B cell (primary cell): ENCODE measurements at regions of chr3 and their contacts with region 1.

Region 1: DNA sequence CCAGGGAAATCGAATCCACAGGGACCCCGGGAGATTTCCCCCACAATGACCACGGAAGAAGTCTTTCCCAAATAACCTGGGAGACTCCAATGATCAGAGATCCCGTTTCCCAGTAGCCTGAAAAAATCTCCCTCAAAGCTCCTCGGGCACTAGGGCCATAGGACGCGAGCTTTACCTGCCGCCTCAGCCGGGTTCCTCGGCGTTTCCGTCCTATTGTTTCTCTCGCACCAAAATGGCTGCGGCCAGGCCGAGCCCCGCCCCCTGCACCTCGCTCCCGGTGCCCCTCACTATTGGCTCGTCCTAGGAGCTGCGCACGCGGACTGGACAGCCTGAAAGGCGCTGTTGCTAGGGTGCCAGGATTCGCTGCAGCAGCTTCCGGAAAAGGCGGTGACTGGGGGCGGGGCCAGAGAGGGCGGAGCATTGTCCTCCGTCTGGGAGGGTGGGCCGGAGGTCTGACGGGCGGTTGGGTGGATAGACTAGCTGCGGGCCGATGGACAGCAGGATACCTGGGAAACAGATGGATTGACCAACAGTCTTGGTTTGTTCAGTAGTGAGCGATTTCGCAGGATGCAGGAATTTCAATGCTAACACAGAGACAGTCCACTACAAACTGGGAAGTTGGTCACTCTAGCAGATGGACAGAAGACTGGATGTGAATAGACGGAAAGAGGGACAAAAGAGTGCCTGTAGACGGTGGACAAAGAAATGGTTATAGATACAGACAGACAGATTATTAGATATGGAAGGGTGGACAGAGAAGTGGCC is at the start of gene IP6K2:
- DNase-seq: peak; percentile 97
- ATAC-seq: peak; percentile 99
- H3K4me3 ChIP-seq: peak within 1 kb of the TSS; percentile 90 to 99 (median 95)
- H3K4me3 Mint-ChIP-seq: peak within 1 kb of the TSS; percentile 98
- H3K27ac ChIP-seq: peak within 1 kb of the TSS; percentile 74 to 77
- H3K27ac Mint-ChIP-seq: peak within 1 kb of the TSS; percentile 93
- H3K4me1 ChIP-seq: peaks cover 18 to 20% of the 10 kb centered on the region in 2 donors
- H3K4me1 Mint-ChIP-seq: peaks cover 33% of the 10 kb centered on the region
- H3K27me3 ChIP-seq: no peaks in the 10 kb centered on the region
- H3K27me3 Mint-ChIP-seq: no peaks in the 10 kb centered on the region
- CTCF ChIP-seq: no peak
- total RNA-seq, gene IP6K2: 138 and 140 TPM in 2 replicates

Region 2: DNA sequence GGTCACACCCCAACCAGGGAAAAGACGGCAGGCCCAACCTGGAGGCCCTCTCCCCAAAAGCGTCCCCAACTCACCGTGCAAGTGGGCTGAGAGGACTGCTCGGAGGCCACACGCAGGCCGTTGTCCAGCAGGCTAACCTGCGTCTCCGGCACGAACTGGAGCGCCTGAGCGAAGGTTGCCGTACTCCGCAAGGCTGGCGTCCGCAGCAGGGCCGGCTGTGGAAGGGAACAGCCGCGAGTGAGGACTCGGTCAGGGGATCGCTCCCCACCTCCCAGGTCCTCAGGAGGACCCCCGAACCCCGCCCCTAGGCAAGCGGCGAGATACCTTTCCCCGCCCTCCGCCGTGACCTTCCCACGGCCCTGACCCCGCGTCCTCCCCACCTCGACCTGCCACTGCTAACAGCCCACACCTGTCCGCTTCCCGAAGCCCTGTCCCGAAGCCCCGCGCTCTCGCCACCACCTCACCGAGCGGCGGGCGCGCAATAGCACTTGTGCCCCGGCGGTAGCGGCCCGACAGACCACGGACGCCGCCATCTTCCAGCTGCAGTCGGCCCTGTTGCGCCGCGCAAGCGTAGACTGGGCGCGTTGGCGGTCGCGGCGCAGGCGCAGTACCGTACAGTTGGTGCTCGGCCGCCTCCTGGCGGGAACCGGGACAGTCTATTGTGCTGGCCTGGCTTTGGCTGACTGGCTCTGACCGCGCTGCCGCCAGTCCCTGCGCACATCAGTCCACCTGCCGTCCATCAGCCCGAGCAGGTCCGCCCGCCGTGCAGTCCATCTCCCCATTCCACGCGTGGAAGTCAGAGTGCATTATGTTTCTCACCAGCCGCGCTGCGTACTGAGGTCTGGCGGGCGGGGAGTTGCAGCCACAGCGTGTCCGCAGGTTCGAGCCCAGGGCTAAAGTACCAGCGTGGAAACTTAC is 107.8 kb before region 1 on chr3 and contains the start of gene UQCRC1:
- CTCF ChIA-PET with region 1: no interaction called
- POLR2A ChIA-PET with region 1: interaction called, 3 read pairs
- intact Hi-C with region 1: loop called (anchors 1 kb)
- DNase-seq: peak; percentile 95
- ATAC-seq: peak; percentile 99
- H3K4me3 ChIP-seq: peak within 1 kb of the TSS; percentile 68 to 99 (median 94)
- H3K4me3 Mint-ChIP-seq: peak within 1 kb of the TSS; percentile 100
- H3K27ac ChIP-seq: peak within 1 kb of the TSS; percentile 72 to 90
- H3K27ac Mint-ChIP-seq: peak within 1 kb of the TSS; percentile 98
- H3K4me1 ChIP-seq: peaks cover 10 to 14% of the 10 kb centered on the region in 2 donors
- H3K4me1 Mint-ChIP-seq: peaks cover 15% of the 10 kb centered on the region
- H3K27me3 ChIP-seq: no peaks in the 10 kb centered on the region
- H3K27me3 Mint-ChIP-seq: no peaks in the 10 kb centered on the region
- CTCF ChIP-seq: peak; percentile 81
- total RNA-seq, gene UQCRC1: 98.9 and 99.9 TPM in 2 replicates

Region 3: GRCh38 chr3:48685602-48686511 is 31.3 kb before region 1 on chr3 and contains the start of gene NCKIPSD:
- CTCF ChIA-PET with region 1: interaction called, 3 read pairs
- POLR2A ChIA-PET with region 1: no interaction called
- intact Hi-C with region 1: loop called (anchors 1 kb)
- DNase-seq: peak; percentile 96
- ATAC-seq: peak; percentile 91
- H3K4me3 ChIP-seq: peak within 1 kb of the TSS in 4 of 5 experiments; percentile 58 to 75 (median 70)
- H3K4me3 Mint-ChIP-seq: peak within 1 kb of the TSS; percentile 89
- H3K27ac ChIP-seq: peak within 1 kb of the TSS; percentile 40 to 68
- H3K27ac Mint-ChIP-seq: peak within 1 kb of the TSS; percentile 92
- H3K4me1 ChIP-seq: peaks cover 10 to 25% of the 10 kb centered on the region in 2 donors
- H3K4me1 Mint-ChIP-seq: peaks cover 22% of the 10 kb centered on the region
- H3K27me3 ChIP-seq: no peaks in the 10 kb centered on the region
- H3K27me3 Mint-ChIP-seq: no peaks in the 10 kb centered on the region
- CTCF ChIP-seq: peak; percentile 91
- total RNA-seq, gene NCKIPSD: 19.1 and 19.7 TPM in 2 replicates

Region 4: DNA sequence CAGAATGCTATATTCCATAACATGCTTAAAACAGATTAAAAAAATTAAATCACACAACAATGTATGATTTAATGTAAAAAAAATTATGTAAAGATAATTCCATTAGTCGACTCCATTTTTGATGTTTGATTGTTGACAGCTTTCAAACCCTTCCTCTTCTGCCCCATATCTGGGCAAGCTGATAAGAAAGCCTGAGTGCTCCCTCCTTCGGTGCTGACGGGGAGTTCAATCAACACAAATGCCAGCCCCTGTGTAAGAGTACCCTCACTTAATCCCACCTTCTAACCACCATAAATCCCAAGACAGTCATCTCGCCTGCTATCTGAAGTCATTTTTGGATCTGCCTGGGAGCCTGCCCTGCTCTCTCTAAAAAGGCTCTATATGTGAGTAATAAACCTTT is 59.7 kb after region 1 on chr3:
- CTCF ChIA-PET with region 1: no interaction called
- POLR2A ChIA-PET with region 1: no interaction called
- intact Hi-C with region 1: no loop called
- DNase-seq: no peak
- ATAC-seq: no peak
- H3K4me3 ChIP-seq: no peak overlapping the region
- H3K4me3 Mint-ChIP-seq: no peak overlapping the region
- H3K27ac ChIP-seq: no peak overlapping the region
- H3K27ac Mint-ChIP-seq: no peak overlapping the region
- H3K4me1 ChIP-seq: no peaks in the 10 kb centered on the region
- H3K4me1 Mint-ChIP-seq: no peaks in the 10 kb centered on the region
- H3K27me3 ChIP-seq: no peaks in the 10 kb centered on the region
- H3K27me3 Mint-ChIP-seq: no peaks in the 10 kb centered on the region
- CTCF ChIP-seq: no peak

Region 5: DNA sequence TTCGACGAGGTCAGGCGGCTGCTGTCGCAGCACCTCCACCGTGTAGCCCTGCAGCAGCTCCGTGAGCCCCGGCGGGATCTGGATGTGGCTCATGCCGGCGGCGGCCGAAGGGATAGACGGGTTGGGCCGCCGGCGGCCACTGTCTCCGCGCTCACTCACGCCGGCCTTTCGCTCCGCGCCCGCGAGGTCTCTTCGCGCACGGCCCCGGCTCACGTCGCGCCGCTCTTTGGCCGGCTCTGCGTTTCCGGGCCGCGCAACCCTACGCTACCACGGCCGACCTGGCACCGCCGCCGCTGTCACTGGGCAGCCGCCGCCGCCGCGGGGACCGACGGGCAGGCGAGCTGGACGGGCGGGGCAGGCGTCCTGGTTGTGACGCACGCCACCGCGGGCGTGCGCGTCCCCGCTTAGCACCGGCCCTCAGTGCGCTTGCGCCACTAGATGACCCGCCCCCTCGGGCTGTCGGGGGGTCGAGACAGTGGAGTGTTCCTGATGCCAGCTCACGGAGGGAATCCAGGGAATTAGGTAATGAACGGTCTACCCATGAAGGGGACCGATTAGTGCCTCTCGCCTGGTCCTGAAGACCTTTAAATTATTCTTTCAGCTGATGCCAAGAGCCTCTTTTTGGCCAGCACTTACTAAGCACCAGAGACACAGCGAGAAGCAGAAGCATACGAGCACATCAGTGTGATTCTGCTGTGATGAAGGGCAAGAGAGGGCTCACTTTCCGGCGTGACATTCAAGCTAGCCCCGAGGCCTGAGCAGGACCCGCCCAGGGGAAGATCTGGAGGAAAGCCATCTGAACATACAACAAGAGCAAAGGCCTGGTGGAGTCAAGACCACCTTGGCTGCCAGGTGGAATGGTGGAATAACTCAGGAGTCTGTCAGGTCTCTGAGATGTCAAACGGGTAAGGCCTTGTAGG is 130.6 kb after region 1 on chr3 and contains the start of gene PRKAR2A:
- CTCF ChIA-PET with region 1: no interaction called
- POLR2A ChIA-PET with region 1: interaction called, 3 read pairs
- intact Hi-C with region 1: loop called (anchors 1 kb)
- DNase-seq: peak; percentile 93
- ATAC-seq: peak; percentile 95
- H3K4me3 ChIP-seq: peak within 1 kb of the TSS; percentile 67 to 88 (median 80)
- H3K4me3 Mint-ChIP-seq: peak within 1 kb of the TSS; percentile 96
- H3K27ac ChIP-seq: peak within 1 kb of the TSS; percentile 68 to 89
- H3K27ac Mint-ChIP-seq: peak within 1 kb of the TSS; percentile 96
- H3K4me1 ChIP-seq: peaks cover 16 to 25% of the 10 kb centered on the region in 2 donors
- H3K4me1 Mint-ChIP-seq: peaks cover 28% of the 10 kb centered on the region
- H3K27me3 ChIP-seq: no peaks in the 10 kb centered on the region
- H3K27me3 Mint-ChIP-seq: no peaks in the 10 kb centered on the region
- CTCF ChIP-seq: no peak
- total RNA-seq, gene PRKAR2A: 25.0 and 27.5 TPM in 2 replicates

Region 6: DNA sequence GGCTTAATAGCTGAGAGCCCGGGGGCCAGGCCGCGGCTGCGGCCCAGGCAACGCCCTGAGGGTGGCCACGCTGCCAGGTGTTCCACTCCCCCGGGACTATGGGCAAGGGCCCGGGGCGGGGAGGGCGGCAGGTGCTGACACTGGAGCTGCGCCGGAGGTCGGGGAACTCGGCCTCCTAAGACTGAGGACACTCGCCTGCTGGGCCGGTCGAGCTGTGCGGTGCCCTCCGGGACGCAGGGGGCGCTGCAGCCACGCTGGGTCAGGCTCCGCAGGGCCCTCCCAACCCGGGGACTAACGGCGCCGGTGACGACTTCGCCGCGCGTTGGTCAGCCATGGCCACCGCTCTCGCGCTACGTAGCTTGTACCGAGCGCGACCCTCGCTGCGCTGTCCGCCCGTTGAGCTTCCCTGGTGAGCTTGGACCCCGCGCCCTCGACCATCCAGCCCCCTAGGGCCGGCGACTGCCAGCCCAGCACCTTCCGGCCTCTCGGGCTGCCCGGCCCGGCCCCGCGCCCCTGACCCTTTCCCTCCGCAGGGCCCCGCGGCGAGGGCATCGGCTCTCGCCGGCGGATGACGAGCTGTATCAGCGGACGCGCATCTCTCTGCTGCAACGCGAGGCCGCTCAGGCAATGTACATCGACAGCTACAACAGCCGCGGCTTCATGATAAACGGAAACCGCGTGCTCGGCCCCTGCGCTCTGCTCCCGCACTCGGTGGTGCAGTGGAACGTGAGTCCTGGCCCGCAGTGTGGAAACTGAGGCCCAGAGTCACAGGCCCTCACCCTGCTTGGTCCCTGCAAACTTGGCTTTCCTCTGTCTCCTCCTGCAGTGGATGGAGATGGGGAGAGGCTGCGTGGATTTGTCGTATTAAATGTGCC is 304.9 kb after region 1 on chr3 and contains the start of gene NDUFAF3:
- CTCF ChIA-PET with region 1: no interaction called
- POLR2A ChIA-PET with region 1: no interaction called
- intact Hi-C with region 1: loop called (anchors 10 kb)
- DNase-seq: peak; percentile 96
- ATAC-seq: peak; percentile 66
- H3K4me3 ChIP-seq: peak within 1 kb of the TSS; percentile 66 to 92 (median 89)
- H3K4me3 Mint-ChIP-seq: peak within 1 kb of the TSS; percentile 96
- H3K27ac ChIP-seq: peak within 1 kb of the TSS; percentile 96 to 98
- H3K27ac Mint-ChIP-seq: peak within 1 kb of the TSS; percentile 97
- H3K4me1 ChIP-seq: peaks cover 36 to 60% of the 10 kb centered on the region in 2 donors
- H3K4me1 Mint-ChIP-seq: peaks cover 65% of the 10 kb centered on the region
- H3K27me3 ChIP-seq: no peaks in the 10 kb centered on the region
- H3K27me3 Mint-ChIP-seq: no peaks in the 10 kb centered on the region
- CTCF ChIP-seq: peak; percentile 95
- total RNA-seq, gene NDUFAF3: 67.0 and 67.5 TPM in 2 replicates